ENCODE measurements at regions of chr5 and their contacts with region 1.

Region 1: GRCh38 chr5:139147483-139148087 is 50.6 kb downstream of the SIL1 start:
- DNase-seq: peak; percentile 54
- ATAC-seq: peak; percentile 63
- H3K4me3 ChIP-seq: no peak overlapping the region
- H3K27ac ChIP-seq: no peak overlapping the region; the same call in 1 of the 2 replicates
- H3K4me1 ChIP-seq: peaks cover 15% of the 10 kb centered on the region
- H3K27me3 ChIP-seq: no peaks in the 10 kb centered on the region
- CTCF ChIP-seq: no peak
- POLR2A ChIP-seq: no peak
- RAD21 ChIP-seq: no peak

Region 2: DNA sequence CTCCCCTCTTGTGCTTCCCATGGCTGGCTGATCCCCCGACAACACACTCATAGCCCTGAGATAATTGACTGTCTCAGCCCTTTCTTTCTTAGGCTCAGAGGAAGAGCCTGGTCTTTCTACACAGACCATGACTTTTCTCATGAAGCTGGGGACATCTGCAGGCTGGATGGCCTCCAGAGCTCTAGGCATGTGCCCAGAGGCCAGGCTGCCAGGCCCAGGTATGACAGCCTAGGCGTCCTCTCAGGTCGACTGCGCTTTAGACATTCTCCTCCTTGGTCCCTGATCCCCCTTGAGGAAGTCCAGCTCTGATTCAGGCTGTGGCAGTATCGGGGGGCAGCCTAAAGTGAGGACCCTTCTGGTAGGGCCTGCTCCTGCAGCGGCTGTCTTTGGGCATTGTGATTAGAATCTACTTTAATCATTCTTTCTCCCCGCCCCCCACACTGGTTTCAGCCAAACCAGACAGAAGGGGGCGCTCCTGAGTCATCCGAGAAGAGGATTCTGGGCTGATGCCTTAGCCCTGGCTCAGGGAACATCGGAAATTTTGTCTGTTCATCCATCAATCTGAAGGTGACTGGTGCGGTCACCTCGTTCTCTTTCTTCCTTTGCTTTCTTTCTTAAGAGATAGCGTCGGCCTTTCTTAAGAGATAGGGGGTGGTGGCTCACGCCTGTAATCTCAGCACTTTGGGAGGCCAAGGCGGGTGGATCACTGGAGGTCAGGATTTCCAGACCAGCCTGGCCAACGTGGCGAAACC is 505.9 kb before region 1 on chr5:
- CTCF ChIA-PET with region 1: no interaction called
- POLR2A ChIA-PET with region 1: no interaction called
- dilution Hi-C with region 1: no loop called
- in situ Hi-C with region 1: no loop called
- intact Hi-C with region 1: loop called (anchors 10 kb)
- DNase-seq: peak; percentile 60
- ATAC-seq: peak; percentile 88
- H3K4me3 ChIP-seq: no peak overlapping the region
- H3K27ac ChIP-seq: no peak overlapping the region
- H3K4me1 ChIP-seq: no peaks in the 10 kb centered on the region
- H3K27me3 ChIP-seq: peaks cover 45% of the 10 kb centered on the region
- CTCF ChIP-seq: peak; percentile 84
- POLR2A ChIP-seq: no peak
- RAD21 ChIP-seq: peak; percentile 90

Region 3: GRCh38 chr5:139186752-139187659 is 39.4 kb after region 1 on chr5:
- CTCF ChIA-PET with region 1: no interaction called
- POLR2A ChIA-PET with region 1: no interaction called
- dilution Hi-C with region 1: no loop called
- in situ Hi-C with region 1: no loop called
- intact Hi-C with region 1: loop called (anchors 5 kb)
- DNase-seq: peak; percentile 84
- ATAC-seq: peak; percentile 66
- H3K4me3 ChIP-seq: no peak overlapping the region
- H3K27ac ChIP-seq: peak overlapping the region; percentile 98; the same call in 1 of the 2 replicates
- H3K4me1 ChIP-seq: peaks cover 29% of the 10 kb centered on the region
- H3K27me3 ChIP-seq: no peaks in the 10 kb centered on the region
- CTCF ChIP-seq: no peak
- POLR2A ChIP-seq: no peak
- RAD21 ChIP-seq: no peak

Measured in IMR-90 (cell line).